ENCODE measurements at regions of chr21 and their contacts with region 1.

Region 1: GRCh38 chr21:44801468-44802395 is at the start of gene UBE2G2:
- DNase-seq: peak; percentile 90
- ATAC-seq: peak; percentile 98
- total RNA-seq, gene UBE2G2: 64.5 TPM

Region 2: DNA sequence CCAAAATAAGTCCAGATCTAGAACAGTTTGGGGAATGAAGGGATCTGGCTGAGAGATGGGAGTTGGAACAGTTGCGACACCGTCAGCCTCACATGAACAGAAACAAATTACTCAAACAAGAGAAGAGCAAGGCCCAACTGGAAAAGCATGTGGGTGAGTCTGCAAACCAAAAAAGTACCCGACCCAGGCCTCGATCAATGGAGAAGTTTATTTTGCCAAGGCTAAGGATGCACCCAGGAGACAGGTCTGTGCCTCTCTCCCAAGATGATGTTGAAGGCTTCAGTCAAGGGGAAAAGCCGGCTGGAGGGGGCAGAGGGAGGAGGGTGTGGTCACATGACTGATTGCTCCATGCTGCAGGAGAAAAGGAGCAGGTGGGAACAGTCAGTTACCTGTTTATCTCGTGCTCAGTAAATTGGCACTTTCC is 304.0 kb before region 1 on chr21:
- intact Hi-C with region 1: no loop called
- DNase-seq: no peak
- ATAC-seq: peak; percentile 38

Region 3: DNA sequence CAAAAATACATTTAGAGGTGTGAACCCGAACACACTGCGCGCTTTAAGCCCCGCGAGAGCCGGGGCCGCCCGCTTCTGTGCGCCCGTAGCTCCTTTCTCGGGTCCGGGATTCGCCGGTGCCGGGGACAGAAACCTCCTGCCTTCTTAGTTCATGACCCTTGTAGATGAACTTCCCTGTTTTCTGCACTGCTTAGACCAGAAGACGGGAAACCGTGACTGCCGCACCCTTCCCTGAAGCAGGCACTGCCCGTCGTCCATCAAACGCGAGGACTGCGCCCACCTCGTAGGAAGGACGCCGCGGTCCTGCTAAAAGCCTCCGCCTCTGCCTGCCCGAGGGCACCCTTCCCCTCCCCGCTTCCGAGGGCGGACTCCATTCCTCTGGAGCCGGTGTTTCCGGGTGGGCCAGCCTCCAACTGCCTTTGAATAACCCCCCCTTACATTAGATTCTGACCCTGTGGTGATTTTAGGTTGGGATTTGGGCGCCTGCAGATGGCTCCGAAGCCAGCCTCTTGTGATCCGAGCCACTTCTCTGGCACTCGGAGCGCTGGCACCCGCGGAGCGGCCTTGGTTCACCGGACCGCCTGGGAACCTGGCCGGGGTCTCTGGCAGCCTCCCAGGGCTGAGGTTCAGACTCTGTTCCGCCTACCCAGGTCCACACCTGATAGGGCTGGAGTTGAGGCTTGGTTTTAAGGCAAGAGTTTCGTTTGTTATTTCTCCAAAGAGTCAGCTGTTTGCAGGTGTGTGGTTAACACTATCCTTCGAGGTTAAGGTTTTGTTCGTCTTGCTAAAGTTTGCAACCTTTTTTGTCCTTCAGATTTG is 73.0 kb after region 1 on chr21:
- intact Hi-C with region 1: loop called (anchors 5 kb)
- DNase-seq: peak; percentile 89
- ATAC-seq: peak; percentile 13